ENCODE measurements at regions of chr3 and their contacts with region 1.

Region 1: DNA sequence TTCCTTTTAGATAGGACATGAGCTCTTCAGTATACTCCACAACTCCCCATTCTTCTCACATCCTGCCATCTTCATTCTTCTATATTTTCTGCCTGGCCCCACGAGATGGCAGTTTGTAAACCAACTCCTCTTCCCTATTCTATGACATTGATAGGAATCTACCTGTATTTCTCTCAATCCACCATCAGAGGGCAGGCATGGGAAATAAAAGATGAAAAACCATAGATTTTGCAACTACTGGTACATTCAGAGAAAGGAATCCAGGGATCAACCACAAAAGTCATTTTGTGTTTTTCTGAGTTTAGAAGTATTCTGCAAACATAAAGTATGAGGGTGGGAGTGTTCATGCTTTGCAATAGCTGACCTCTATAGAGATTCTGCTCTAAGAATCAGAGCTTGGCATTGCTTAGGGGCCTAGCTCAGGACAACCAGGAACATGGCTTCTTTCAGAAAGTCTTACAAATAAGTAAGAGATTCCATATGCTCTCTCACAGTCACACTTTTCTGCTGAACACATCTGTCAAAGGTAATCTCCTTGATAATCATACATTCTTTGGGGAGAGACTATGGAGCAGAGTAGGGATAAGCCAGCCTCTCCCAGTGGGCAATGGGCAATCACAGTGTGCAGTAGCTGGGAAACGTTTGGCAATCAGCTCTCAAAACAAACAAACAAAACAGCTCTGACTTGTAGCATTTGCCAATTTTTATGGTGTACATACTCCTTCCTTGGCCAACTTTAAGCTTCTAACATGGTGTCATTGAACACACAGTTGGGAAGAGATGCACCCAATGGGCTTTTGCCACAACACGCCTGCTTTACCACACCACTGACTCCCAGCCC is 43.1 kb upstream of the SLC25A36 start:
- DNase-seq: no peak
- H3K4me3 Mint-ChIP-seq: no peak overlapping the region
- H3K27ac Mint-ChIP-seq: no peak overlapping the region
- H3K4me1 Mint-ChIP-seq: no peaks in the 10 kb centered on the region
- H3K27me3 Mint-ChIP-seq: peaks cover 10% of the 10 kb centered on the region

Region 2: GRCh38 chr3:140766465-140766864 is 132.1 kb before region 1 on chr3:
- CTCF ChIA-PET with region 1: no interaction called
- POLR2A ChIA-PET with region 1: no interaction called
- intact Hi-C with region 1: no loop called
- DNase-seq: no peak
- H3K4me3 Mint-ChIP-seq: no peak overlapping the region
- H3K27ac Mint-ChIP-seq: no peak overlapping the region
- H3K4me1 Mint-ChIP-seq: no peaks in the 10 kb centered on the region
- H3K27me3 Mint-ChIP-seq: peaks cover 4% of the 10 kb centered on the region

Region 3: DNA sequence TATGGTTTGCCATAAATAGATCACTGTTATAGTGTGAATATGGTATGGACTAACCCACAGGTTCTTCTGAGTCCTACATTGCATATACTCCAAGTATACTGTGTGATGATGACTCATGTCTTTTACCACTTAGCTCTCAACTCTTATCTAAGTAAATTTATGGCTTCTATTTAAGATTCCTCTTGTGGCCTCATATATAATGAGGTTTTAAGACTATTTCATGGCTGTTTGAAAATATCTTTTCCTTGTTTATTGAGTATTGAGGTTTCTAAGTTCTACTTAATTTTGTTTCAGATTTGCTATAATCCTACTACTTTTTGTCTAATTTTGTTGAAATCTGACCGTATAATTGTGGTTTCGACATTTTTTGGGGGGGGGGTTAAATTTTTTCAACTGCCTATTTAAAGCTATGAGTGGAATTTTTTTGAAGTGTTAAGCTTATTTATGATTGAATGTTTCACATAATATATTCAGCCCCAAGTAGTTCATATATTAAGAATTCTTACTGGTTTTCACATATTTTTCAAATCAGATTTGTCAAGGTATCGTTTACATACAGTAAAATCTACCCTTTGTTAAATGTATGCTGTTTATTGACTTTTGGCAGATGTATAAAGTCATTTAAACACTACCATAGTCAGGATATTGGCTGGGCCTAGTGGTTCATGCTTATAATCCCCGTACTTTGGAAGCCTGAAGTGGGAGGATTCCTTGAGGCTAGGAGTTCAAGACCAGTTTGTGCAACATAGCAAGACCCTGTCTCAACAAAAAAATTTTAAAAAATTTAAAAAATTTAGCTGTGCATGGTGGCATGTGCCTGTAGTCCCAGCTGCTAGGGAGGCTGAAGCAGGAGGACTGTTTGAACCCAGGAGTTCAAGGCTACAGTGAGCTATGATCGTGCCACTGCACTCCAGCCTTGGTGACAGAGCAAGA is 54.7 kb after region 1 on chr3:
- CTCF ChIA-PET with region 1: no interaction called
- POLR2A ChIA-PET with region 1: no interaction called
- intact Hi-C with region 1: no loop called
- DNase-seq: no peak
- H3K4me3 Mint-ChIP-seq: no peak overlapping the region
- H3K27ac Mint-ChIP-seq: no peak overlapping the region
- H3K4me1 Mint-ChIP-seq: peaks cover 41% of the 10 kb centered on the region
- H3K27me3 Mint-ChIP-seq: no peaks in the 10 kb centered on the region

Region 4: GRCh38 chr3:140972833-140973232 is 74.3 kb after region 1 on chr3:
- CTCF ChIA-PET with region 1: interaction called, 4 read pairs
- POLR2A ChIA-PET with region 1: no interaction called
- intact Hi-C with region 1: loop called (anchors 1 kb)
- DNase-seq: no peak
- H3K4me3 Mint-ChIP-seq: no peak overlapping the region
- H3K27ac Mint-ChIP-seq: no peak overlapping the region
- H3K4me1 Mint-ChIP-seq: peaks cover 4% of the 10 kb centered on the region
- H3K27me3 Mint-ChIP-seq: no peaks in the 10 kb centered on the region

Region 5: GRCh38 chr3:141039589-141039988 is 141.0 kb after region 1 on chr3:
- CTCF ChIA-PET with region 1: no interaction called
- POLR2A ChIA-PET with region 1: no interaction called
- intact Hi-C with region 1: no loop called
- DNase-seq: no peak
- H3K4me3 Mint-ChIP-seq: no peak overlapping the region
- H3K27ac Mint-ChIP-seq: no peak overlapping the region
- H3K4me1 Mint-ChIP-seq: no peaks in the 10 kb centered on the region
- H3K27me3 Mint-ChIP-seq: peaks cover 11% of the 10 kb centered on the region

Measured in activated CD4-positive, alpha-beta memory T cell treated with anti-CD3 and anti-CD28 coated beads for 36 hours (primary cell).